ENCODE measurements at regions of chr1 and their contacts with region 1.

Region 1: GRCh38 chr1:199684686-199685273 is 342.7 kb upstream of the NR5A2 start:
- DNase-seq: peak; percentile 25
- ATAC-seq: peak; percentile 91
- H3K4me3 ChIP-seq: no peak overlapping the region
- H3K27ac ChIP-seq: no peak overlapping the region
- H3K4me1 ChIP-seq: no peaks in the 10 kb centered on the region
- H3K27me3 ChIP-seq: no peaks in the 10 kb centered on the region; a peak in 1 of 5 replicates
- CTCF ChIP-seq: peak; percentile 77
- EP300 ChIP-seq: no peak
- POLR2A ChIP-seq: no peak
- RAD21 ChIP-seq: peak; percentile 40

Region 2: GRCh38 chr1:199646761-199647160 is 38.0 kb before region 1 on chr1:
- CTCF ChIA-PET with region 1: no interaction called
- POLR2A ChIA-PET with region 1: no interaction called
- in situ Hi-C with region 1: no loop called
- intact Hi-C with region 1: no loop called
- DNase-seq: peak; percentile 13
- ATAC-seq: peak; percentile 74
- H3K4me3 ChIP-seq: no peak overlapping the region
- H3K27ac ChIP-seq: no peak overlapping the region
- H3K4me1 ChIP-seq: 0 out of 2 replicates have a peak, but pooled peaks cover 6% of the 10 kb centered on the region
- H3K27me3 ChIP-seq: no peaks in the 10 kb centered on the region
- CTCF ChIP-seq: no peak
- EP300 ChIP-seq: no peak
- POLR2A ChIP-seq: no peak
- RAD21 ChIP-seq: no peak

Region 3: DNA sequence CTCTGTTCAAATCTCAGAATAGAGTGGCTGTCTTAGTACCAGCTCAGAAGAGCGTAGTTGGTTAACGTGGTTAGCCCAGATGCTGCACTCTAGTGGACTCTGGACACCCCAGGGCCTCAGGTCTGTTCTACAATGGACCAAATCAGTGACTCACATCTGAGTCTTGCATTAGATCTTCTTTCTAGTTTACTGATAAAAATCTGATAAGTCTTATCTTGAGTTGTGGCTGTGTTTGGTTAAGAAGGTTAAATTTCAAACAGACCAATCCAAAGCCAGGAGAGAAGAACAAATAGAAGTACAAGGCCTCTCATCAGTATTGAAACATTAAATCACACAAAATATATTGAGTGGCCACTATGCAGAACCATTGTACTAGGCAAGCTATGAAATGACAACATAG is 446.8 kb after region 1 on chr1:
- CTCF ChIA-PET with region 1: no interaction called
- POLR2A ChIA-PET with region 1: no interaction called
- in situ Hi-C with region 1: no loop called
- intact Hi-C with region 1: loop called (anchors 5 kb)
- DNase-seq: peak; percentile 19
- ATAC-seq: peak; percentile 80
- H3K4me3 ChIP-seq: no peak overlapping the region
- H3K27ac ChIP-seq: no peak overlapping the region
- H3K4me1 ChIP-seq: peaks cover 17% of the 10 kb centered on the region
- H3K27me3 ChIP-seq: no peaks in the 10 kb centered on the region; a peak in 1 of 5 replicates
- CTCF ChIP-seq: peak; percentile 31; the same call in 1 of the 2 replicates
- EP300 ChIP-seq: no peak
- POLR2A ChIP-seq: no peak
- RAD21 ChIP-seq: no peak

Region 4: GRCh38 chr1:200258447-200259375 is 573.9 kb after region 1 on chr1:
- CTCF ChIA-PET with region 1: no interaction called
- POLR2A ChIA-PET with region 1: no interaction called
- in situ Hi-C with region 1: loop called (anchors 25 kb)
- intact Hi-C with region 1: no loop called
- DNase-seq: peak; percentile 52
- ATAC-seq: peak; percentile 70
- H3K4me3 ChIP-seq: no peak overlapping the region
- H3K27ac ChIP-seq: no peak overlapping the region
- H3K4me1 ChIP-seq: peaks cover 46% of the 10 kb centered on the region
- H3K27me3 ChIP-seq: no peaks in the 10 kb centered on the region; a peak in 2 of 5 replicates
- CTCF ChIP-seq: peak; percentile 51
- EP300 ChIP-seq: no peak
- POLR2A ChIP-seq: no peak
- RAD21 ChIP-seq: 0 out of 2 replicates have a peak, but pooled peaks have one; percentile 21

Measured in HepG2 (cell line).